ENCODE measurements at regions of chr13 and their contacts with region 1.

Region 1: GRCh38 chr13:26985285-26985878 is 186.2 kb downstream of the USP12 start:
- DNase-seq: peak; percentile 72

Region 2: GRCh38 chr13:26941345-26942174 is 43.8 kb before region 1 on chr13:
- intact Hi-C with region 1: no loop called
- DNase-seq: no peak

Region 3: GRCh38 chr13:27270594-27271520 is 285.5 kb after region 1 on chr13 and contains the start of gene RASL11A:
- intact Hi-C with region 1: loop called (anchors 5 to 10 kb)
- DNase-seq: peak; percentile 95
- total RNA-seq, gene RASL11A: 39.7 to 46.4 TPM

Region 4: DNA sequence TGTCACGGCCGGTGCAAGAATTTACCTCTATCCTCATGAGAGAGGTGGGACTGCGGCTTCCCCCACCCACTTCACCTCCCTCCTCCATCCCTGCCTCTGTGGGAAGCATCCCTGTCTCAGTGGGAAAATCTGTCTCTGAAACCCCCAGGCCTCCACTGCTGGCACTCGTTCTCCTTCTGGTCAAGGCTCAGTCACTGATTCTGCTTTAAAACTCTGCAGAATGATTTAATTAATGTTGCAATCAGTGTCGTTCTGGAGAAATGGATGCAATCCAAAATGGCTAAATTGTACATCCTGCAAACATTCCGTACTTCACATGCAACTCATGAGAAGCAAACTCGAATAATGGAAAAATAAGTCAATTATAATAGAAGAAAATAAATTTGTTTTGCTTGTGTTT is 290.8 kb after region 1 on chr13:
- intact Hi-C with region 1: loop called (anchors 5 to 10 kb)
- DNase-seq: no peak

Region 5: GRCh38 chr13:27620377-27621115 is 635.2 kb after region 1 on chr13 and contains the start of gene LNX2:
- intact Hi-C with region 1: no loop called
- DNase-seq: peak; percentile 99
- total RNA-seq, gene LNX2: 4.9 to 7.6 TPM

Measured in posterior vena cava (tissue), 2 donors.